ENCODE measurements at regions of chr13 and their contacts with region 1.

Region 1: DNA sequence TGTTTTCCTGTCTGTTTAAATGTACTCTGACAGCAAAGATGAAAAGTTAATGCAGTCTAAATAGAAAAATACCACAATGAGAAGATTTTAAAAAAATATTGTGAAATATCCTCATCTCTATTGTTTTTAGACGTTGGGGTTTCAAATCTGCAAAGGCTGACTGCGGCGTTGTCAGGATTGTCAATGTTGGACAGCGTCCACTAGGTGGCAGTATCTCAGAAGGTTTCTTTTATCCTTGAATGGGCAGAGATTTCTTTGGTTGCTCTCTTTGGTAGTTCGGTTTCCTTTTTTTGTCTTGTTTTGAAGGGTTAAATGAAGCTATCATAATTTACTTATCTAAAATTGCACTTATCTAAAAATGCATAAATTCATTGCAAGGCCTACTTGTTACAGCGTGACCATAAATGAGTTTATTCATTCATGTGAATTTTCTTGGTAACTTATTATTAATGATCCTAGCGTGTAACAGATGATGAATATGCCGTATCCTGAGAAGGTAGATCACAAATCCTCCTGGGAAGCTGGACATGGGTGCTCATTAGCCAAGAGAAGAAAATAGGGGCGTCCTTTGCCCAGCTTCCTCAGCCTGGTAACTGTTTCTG is 21.1 kb downstream of the TNFSF11 start:
- DNase-seq: peak in 1 of 2 donors; percentile 42
- ATAC-seq: peak in 2 of 8 donors; percentile 58 to 70
- H3K4me3 ChIP-seq: no peak overlapping the region
- H3K27ac ChIP-seq: no peak overlapping the region
- H3K4me1 ChIP-seq: peaks cover 0 to 9% (median 0%) of the 10 kb centered on the region in 9 donors
- H3K27me3 ChIP-seq: peaks cover 0 to 35% (median 11%) of the 10 kb centered on the region in 7 donors
- CTCF ChIP-seq: peak; percentile 73 to 90 (median 84)

Region 2: GRCh38 chr13:42814868-42815267 is 219.8 kb after region 1 on chr13:
- intact Hi-C with region 1: loop called in 1 of 10 experiments (anchors 5 kb)
- DNase-seq: no peak
- ATAC-seq: no peak
- H3K4me3 ChIP-seq: no peak overlapping the region
- H3K27ac ChIP-seq: no peak overlapping the region
- H3K4me1 ChIP-seq: peaks cover 0 to 5% (median 0%) of the 10 kb centered on the region in 9 donors
- H3K27me3 ChIP-seq: no peaks in the 10 kb centered on the region
- CTCF ChIP-seq: no peak

Region 3: DNA sequence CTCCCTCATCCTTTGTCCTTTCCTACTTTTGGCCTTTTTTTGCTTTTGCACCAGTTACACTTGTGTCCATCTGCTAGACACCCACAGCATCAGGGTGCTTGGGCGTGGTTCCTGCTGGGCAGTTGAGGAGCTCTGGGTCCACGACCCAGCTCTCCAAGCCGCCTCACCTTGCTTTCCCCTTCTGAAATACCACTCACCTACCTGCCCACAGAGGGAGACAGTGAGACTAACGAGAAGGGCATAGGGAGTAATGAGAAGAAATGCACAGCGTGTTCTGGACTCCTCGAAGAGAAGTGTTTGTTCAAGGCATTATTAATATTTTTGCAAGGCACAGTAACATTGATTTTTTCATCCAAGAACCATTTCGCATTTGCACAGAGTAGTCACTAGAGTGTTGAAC is 521.2 kb after region 1 on chr13:
- intact Hi-C with region 1: loop called in 1 of 10 experiments (anchors 5 kb)
- DNase-seq: no peak
- ATAC-seq: no peak
- H3K4me3 ChIP-seq: no peak overlapping the region
- H3K27ac ChIP-seq: no peak overlapping the region
- H3K4me1 ChIP-seq: peaks cover 0 to 26% (median 3%) of the 10 kb centered on the region in 9 donors
- H3K27me3 ChIP-seq: no peaks in the 10 kb centered on the region
- CTCF ChIP-seq: no peak

Region 4: DNA sequence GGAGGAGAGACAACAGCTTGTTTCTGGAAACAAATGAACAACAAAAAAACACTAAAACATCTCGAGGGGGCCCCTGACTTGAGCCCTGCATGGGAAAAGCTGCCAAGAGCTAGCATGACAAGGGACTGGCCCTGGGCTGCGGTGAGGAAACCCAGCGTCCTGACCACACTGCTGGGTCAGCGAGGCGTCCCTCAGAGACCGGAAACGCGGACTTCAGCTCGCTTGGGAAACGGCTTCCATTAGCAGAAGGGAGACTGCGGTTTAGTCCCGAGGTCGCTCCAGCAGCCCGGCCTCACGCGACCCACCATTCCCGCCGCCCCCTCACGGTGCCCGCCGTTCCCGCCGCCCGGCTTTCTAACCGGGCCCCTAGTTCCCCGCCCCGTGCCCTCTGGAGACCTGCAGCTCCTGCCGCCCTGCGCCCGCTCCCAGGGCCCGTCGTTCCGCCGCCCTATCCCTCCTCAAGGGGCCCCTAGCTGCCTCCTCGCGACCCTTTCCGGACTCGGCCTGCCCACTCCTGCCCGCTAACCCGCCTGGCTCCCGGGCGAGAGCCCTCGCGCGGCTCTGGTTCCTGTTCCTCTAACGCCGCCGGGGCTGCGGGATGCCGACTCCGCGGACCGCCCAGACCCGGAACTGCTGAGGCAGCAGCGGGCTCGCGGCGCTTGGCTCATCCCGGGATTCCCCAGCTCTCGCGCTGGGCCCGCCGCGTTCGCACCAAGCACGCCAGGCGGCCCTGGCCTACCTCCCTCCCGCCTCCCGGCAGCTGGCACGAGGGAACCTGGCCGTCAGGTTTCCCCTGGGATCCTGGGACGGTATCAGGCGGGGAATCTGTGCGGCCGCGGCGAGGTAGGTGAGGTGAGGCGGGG is 1284.1 kb after region 1 on chr13 and contains the start of gene CCDC122:
- intact Hi-C with region 1: loop called in 1 of 10 experiments (anchors 5 kb)
- DNase-seq: peak; percentile 79 to 87
- ATAC-seq: peak; percentile 86 to 94 (median 92)
- H3K4me3 ChIP-seq: peak within 1 kb of the TSS; percentile 41 to 94 (median 87)
- H3K27ac ChIP-seq: peak within 1 kb of the TSS; percentile 85 to 99 (median 95)
- H3K4me1 ChIP-seq: peaks cover 0 to 46% (median 15%) of the 10 kb centered on the region in 9 donors
- H3K27me3 ChIP-seq: no peaks in the 10 kb centered on the region
- CTCF ChIP-seq: no peak
- total RNA-seq, gene CCDC122: 2.4 to 16.0 (median 7.3) TPM

Measured in heart right ventricle (tissue), 16 donors.